Activated T-helper 2 cell treated with anti-CD3 and anti-CD28 coated beads, Interferon-gamma antibody, Interleukin-2, Interleukin-4, amounts not matched to agents 10 μg/mL and 5 μg/mL and 100 μg/mL, durations not matched to agents 14 hours and 24 hours and 36 hours (primary cell): ENCODE measurements at regions of chr3 and their contacts with region 1.

Region 1: DNA sequence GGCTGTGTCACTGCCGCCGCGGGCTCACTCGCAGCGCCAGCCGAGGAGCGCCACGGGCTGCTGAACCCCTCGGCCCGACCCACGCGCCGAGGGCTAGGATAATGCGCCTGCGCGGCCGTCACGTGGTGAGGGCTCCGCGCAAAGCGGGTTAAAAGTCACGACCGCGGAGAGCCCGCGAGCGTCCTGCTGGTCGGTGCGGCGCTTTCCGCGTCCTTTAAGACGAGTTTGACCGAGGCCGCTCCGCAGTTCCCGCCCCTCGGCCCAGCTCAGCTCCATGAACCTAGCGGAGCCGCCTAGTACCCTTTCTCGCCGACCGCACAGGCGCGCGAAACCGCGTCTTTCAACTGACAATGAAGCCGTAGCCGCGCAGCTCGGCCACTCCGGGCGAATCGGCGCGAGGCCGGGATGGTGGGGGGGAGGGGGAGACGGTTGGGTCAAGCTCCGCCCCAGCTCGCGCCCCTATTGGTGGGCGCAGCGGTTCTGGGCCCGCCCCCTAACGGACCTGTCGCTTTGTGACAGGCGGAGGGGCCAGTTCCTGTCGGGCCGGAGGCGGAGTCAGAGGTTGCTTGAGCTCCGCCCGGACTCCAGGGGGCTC is 636 bp upstream of the STT3B start:
- DNase-seq: peak; percentile 98
- H3K4me3 Mint-ChIP-seq: peak overlapping the region; percentile 82
- H3K27ac Mint-ChIP-seq: peak overlapping the region; percentile 98
- H3K4me1 Mint-ChIP-seq: peaks cover 16% of the 10 kb centered on the region
- H3K27me3 Mint-ChIP-seq: peaks cover 5% of the 10 kb centered on the region

Region 2: DNA sequence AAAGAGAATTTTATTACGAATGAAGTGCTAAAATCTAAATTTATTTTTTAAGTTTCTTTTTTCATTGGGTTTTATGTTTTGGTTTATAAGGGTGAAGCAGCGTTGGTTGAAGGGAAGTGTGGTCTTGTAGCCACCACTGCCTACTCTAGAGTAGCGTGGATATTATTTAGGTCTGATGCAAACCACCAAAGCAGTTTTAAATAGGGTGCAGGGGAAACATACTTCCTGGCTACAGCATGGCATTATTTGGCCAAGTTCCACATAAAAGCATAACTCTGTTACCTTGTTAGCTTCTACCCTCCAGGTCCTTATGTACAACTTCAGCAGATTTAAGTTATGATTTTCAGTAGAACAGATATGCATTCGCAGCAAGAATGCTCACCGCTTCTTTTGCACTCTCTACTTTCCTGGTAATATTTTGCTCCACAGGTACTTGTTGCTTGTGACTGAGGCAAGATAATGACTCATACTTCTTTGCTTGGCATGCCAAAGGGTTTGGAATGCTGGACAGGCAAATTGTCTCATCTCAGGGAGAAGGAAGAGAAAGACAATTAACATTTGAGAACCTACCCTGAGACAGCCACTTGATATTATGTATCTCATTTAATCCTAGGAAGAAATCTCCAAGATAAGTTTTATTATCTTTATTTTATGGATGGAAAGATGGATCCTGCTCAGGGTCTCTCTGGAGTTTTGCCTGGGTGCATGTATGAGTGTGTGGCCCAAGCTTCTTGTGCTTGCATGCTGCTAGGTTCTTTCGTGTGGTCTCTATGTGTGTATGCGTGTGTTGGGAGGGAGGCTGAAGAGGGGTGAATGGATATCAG is 920.3 kb before region 1 on chr3:
- intact Hi-C with region 1: loop called (anchors 5 kb)
- DNase-seq: no peak
- H3K4me3 Mint-ChIP-seq: peak overlapping the region; percentile 68
- H3K27ac Mint-ChIP-seq: peak overlapping the region; percentile 77
- H3K4me1 Mint-ChIP-seq: peaks cover 75% of the 10 kb centered on the region
- H3K27me3 Mint-ChIP-seq: no peaks in the 10 kb centered on the region

Region 3: GRCh38 chr3:31219131-31219843 is 312.8 kb before region 1 on chr3:
- intact Hi-C with region 1: loop called (anchors 2 kb)
- DNase-seq: no peak
- H3K4me3 Mint-ChIP-seq: no peak overlapping the region
- H3K27ac Mint-ChIP-seq: peak overlapping the region; percentile 19
- H3K4me1 Mint-ChIP-seq: peaks cover 78% of the 10 kb centered on the region
- H3K27me3 Mint-ChIP-seq: no peaks in the 10 kb centered on the region

Region 4: DNA sequence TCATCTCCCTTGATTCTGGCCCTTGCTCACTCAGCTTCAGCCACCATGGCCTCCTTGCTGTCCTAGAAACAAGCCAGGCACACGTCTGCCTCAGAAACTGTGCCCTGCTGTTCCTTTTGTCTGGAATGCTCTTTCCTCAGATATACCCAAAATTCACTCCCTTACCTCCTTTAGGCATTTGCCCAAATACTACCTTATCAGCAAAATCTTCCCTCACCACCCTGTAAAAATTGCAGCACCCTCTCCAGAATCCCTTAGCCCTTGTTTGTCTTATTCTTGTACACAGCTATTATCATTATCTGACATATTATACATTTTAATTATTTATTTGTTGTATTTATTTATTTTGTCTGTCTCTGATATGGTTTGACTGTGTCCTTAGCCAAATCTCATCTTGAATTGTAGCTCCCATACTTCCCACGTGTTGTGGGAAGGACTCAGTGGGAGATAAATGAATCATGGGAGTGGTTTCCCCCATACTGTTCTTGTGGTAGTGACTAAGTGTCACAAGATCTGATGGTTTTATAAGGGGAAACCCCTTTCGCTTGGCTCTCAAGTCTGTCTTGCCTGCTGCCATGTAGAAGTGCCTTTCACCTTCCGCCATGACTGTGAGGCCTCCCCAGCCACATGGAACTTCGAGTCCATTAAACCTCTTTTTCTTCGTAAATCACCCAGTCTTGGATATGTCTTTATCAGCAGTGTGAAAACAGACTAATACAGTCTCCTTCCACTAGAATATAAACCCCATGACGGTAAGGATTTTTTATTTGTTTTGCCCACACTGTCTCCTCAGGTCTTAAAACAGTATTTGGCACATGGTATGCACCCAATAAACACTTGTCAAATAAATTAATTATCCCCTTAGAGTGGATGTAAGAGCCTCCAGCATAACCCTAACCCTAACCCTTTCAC is 59.4 kb before region 1 on chr3:
- intact Hi-C with region 1: loop called (anchors 5 kb)
- DNase-seq: no peak
- H3K4me3 Mint-ChIP-seq: no peak overlapping the region
- H3K27ac Mint-ChIP-seq: no peak overlapping the region
- H3K4me1 Mint-ChIP-seq: peaks cover 14% of the 10 kb centered on the region
- H3K27me3 Mint-ChIP-seq: peaks cover 27% of the 10 kb centered on the region

Region 5: GRCh38 chr3:31768479-31769123 is 236.5 kb after region 1 on chr3:
- intact Hi-C with region 1: loop called (anchors 2 kb)
- DNase-seq: peak; percentile 36
- H3K4me3 Mint-ChIP-seq: no peak overlapping the region
- H3K27ac Mint-ChIP-seq: peak overlapping the region; percentile 33
- H3K4me1 Mint-ChIP-seq: peaks cover 57% of the 10 kb centered on the region
- H3K27me3 Mint-ChIP-seq: no peaks in the 10 kb centered on the region

Region 6: GRCh38 chr3:32106280-32106928 is 574.3 kb after region 1 on chr3 and contains the start of gene GPD1L:
- intact Hi-C with region 1: loop called (anchors 1 kb)
- DNase-seq: peak; percentile 92
- H3K4me3 Mint-ChIP-seq: peak within 1 kb of the TSS; percentile 93
- H3K27ac Mint-ChIP-seq: peak within 1 kb of the TSS; percentile 80
- H3K4me1 Mint-ChIP-seq: peaks cover 27% of the 10 kb centered on the region
- H3K27me3 Mint-ChIP-seq: no peaks in the 10 kb centered on the region
- total RNA-seq, gene GPD1L: 18.9 and 19.8 TPM in 2 replicates